ENCODE measurements at regions of chr1 and their contacts with region 1.

Region 1: GRCh38 chr1:65734979-65735378 is 57.7 kb upstream of the PDE4B start:
- ATAC-seq: peak in 2 of 8 experiments; percentile 99
- H3K4me3 ChIP-seq: no peak overlapping the region
- H3K27ac ChIP-seq: no peak overlapping the region
- H3K4me1 ChIP-seq: no peaks in the 10 kb centered on the region

Region 2: DNA sequence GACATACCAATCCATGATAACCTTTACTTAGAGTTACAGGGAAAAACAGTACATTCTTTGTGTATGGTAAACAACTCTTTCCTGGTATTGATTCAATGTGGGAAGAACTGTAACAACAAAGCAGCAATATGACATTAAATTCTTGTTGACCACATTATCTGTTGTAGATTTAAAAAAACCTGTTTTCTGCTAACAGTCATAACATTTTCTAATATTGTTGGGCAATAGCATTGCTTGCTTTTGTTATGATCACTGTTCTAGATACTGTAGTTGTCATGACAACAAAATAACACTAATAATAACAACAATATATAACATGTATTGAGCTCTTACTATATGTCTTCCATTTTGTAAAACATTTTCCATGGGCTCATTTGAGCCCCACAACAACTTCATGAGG is 111.9 kb after region 1 on chr1:
- in situ Hi-C with region 1: no loop called
- ATAC-seq: peak in 2 of 8 experiments; percentile 22 to 47
- H3K4me3 ChIP-seq: no peak overlapping the region
- H3K27ac ChIP-seq: no peak overlapping the region
- H3K4me1 ChIP-seq: peaks cover 0 to 3% of the 10 kb centered on the region in 2 donors

Region 3: DNA sequence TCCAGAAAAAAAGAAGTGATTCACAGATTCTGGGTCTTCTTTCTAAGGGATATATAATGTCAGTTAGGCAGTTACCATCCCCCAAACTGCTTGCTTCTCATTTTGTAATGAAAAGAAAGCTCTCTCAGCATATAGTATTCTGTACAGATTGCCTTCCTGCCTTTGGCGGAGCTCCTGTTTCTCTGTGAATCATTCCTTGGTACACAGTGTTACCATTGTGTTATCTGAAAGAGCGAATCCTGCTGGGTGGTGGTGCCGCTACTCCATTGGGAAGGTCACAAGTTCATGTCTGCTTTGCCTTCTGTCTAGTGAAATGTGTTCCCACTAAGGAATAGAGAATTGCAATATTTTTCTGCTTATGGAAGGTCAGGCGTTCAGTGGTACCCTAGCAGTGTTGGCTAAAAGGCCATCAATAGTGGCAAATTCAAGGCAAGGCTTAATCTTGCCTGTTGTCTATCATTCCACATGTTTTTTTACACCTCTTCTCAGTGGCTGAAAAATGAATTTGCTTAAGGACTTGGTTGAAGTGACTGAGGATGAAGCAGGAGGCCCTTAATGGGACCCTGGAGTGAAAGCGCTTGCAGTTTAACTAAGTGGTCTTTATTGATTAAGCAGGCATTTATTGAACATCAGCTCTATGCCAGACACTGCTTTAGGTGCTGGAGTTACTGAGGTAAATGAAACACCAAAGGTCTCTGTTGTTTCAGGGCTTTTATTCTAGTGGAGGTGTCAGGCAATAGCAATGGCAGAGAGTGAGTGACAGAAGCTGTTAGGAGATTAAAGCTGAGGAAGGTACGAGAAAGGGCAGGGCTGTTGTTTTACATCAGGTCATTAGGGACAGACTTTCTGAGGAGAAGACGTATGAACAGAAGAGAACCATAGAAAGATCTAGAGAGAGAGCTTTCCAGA is 244.4 kb after region 1 on chr1:
- in situ Hi-C with region 1: no loop called
- ATAC-seq: peak in 7 of 8 experiments; percentile 48 to 100 (median 99)
- H3K4me3 ChIP-seq: no peak overlapping the region
- H3K27ac ChIP-seq: peak overlapping the region; percentile 38 to 65
- H3K4me1 ChIP-seq: peaks cover 25 to 28% of the 10 kb centered on the region in 2 donors

Region 4: GRCh38 chr1:66464802-66465201 is 729.8 kb after region 1 on chr1:
- in situ Hi-C with region 1: loop called in 1 of 9 experiments (anchors 25 kb)
- ATAC-seq: peak in 3 of 8 experiments; percentile 47 to 82 (median 74)
- H3K4me3 ChIP-seq: no peak overlapping the region
- H3K27ac ChIP-seq: no peak overlapping the region
- H3K4me1 ChIP-seq: no peaks in the 10 kb centered on the region

Measured in motor neuron (in vitro differentiated cells).